MCF 10A (cell line): ENCODE measurements at regions of chr3 and their contacts with region 1.

Region 1: GRCh38 chr3:131033480-131034080 is 6.9 kb downstream of the NEK11 start:
- DNase-seq: peak; percentile 56
- H3K4me3 Mint-ChIP-seq: no peak overlapping the region
- H3K27ac Mint-ChIP-seq: no peak overlapping the region
- H3K4me1 Mint-ChIP-seq: peaks cover 7% of the 10 kb centered on the region
- H3K27me3 Mint-ChIP-seq: no peaks in the 10 kb centered on the region
- CTCF ChIP-seq: peak; percentile 67

Region 2: GRCh38 chr3:131454501-131454900 is 420.9 kb after region 1 on chr3:
- CTCF ChIA-PET with region 1: interaction called, 3 read pairs
- POLR2A ChIA-PET with region 1: no interaction called
- intact Hi-C with region 1: loop called (anchors 10 kb)
- DNase-seq: peak; percentile 62
- H3K4me3 Mint-ChIP-seq: no peak overlapping the region
- H3K27ac Mint-ChIP-seq: no peak overlapping the region
- H3K4me1 Mint-ChIP-seq: peaks cover 12% of the 10 kb centered on the region
- H3K27me3 Mint-ChIP-seq: no peaks in the 10 kb centered on the region
- CTCF ChIP-seq: no peak